K562 (cell line): ENCODE measurements at regions of chr6 and their contacts with region 1.

Region 1: DNA sequence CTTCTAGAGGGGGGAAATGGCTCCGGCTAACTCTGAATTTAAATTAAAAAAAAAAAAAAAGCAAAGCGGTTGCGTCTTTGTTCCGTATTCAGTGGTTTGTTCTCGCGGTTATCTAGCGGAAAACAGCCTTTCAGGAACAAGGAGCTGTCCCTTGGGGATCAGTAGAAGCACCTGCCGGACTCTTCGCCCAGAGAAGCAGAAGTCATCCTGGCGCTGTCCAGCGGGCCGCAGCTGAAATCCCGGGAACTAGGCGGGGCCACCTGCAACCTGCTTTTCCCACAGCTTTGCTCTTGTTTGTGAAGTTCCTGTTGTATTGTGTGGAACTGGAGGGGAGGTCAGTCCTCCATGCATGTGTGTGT is 43.9 kb upstream of the GJE1 start:
- DNase-seq: peak in 2 of 4 experiments; percentile 21 to 29
- ATAC-seq: peak; percentile 78
- H3K4me3 ChIP-seq: no peak overlapping the region
- H3K27ac ChIP-seq: no peak overlapping the region
- H3K4me1 ChIP-seq: no peaks in the 10 kb centered on the region
- H3K27me3 ChIP-seq: peaks cover 0 to 9% of the 10 kb centered on the region in 2 experiments; a peak in 2 of 5 replicates
- CTCF ChIP-seq: no peak
- EP300 ChIP-seq: no peak
- POLR2A ChIP-seq: no peak
- RAD21 ChIP-seq: no peak

Region 2: GRCh38 chr6:142118925-142119324 is 30.1 kb after region 1 on chr6:
- CTCF ChIA-PET with region 1: no interaction called
- POLR2A ChIA-PET with region 1: no interaction called
- in situ Hi-C with region 1: no loop called
- intact Hi-C with region 1: loop called (anchors 1 kb)
- DNase-seq: no peak
- ATAC-seq: no peak
- H3K4me3 ChIP-seq: no peak overlapping the region
- H3K27ac ChIP-seq: no peak overlapping the region
- H3K4me1 ChIP-seq: no peaks in the 10 kb centered on the region
- H3K27me3 ChIP-seq: no peaks in the 10 kb centered on the region
- CTCF ChIP-seq: no peak
- EP300 ChIP-seq: no peak
- POLR2A ChIP-seq: no peak
- RAD21 ChIP-seq: no peak

Region 3: DNA sequence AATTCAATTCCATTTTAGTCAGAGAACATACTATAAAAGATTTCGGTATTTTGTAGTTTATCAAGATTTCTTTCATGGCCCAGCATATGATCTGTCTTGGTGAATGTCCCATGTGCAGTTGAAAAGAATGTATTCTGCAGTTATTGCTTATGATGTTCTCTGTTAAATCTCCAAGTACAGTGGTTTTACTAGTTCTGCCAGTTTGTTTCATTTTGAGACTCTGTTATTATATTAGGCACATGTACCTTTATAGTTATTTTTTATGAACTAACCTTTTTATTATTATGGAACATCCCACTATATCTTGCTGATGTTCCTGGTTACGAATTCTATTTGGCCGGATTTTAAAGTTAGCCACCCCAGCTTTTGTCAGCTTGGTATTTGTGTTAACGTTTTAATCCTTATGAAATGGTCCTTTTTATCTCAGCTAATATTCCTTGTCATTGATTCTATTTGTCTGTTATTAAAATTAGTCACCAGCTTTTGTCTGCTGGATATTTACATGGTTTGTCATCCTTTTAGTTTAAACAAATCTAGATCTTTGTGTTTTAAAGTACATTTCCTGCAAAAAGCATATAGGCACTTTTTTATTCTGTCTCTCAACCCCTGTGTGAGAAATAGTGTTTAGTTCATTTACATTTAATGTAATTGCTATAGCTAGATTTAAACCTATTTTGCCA is 107.2 kb after region 1 on chr6:
- CTCF ChIA-PET with region 1: no interaction called
- POLR2A ChIA-PET with region 1: no interaction called
- in situ Hi-C with region 1: no loop called
- intact Hi-C with region 1: no loop called
- DNase-seq: no peak
- ATAC-seq: no peak
- H3K4me3 ChIP-seq: no peak overlapping the region
- H3K27ac ChIP-seq: no peak overlapping the region
- H3K4me1 ChIP-seq: no peaks in the 10 kb centered on the region; a peak in 1 of 5 replicates
- H3K27me3 ChIP-seq: no peaks in the 10 kb centered on the region
- CTCF ChIP-seq: no peak
- EP300 ChIP-seq: no peak
- POLR2A ChIP-seq: no peak
- RAD21 ChIP-seq: no peak